ENCODE measurements at regions of chr7 and their contacts with region 1.

Region 1: GRCh38 chr7:105652359-105652993 is 71.2 kb upstream of the EFCAB10 start:
- DNase-seq: no peak
- ATAC-seq: peak; percentile 91
- H3K4me3 ChIP-seq: no peak overlapping the region
- H3K27ac ChIP-seq: no peak overlapping the region
- H3K4me1 ChIP-seq: peaks cover 45% of the 10 kb centered on the region
- H3K27me3 ChIP-seq: no peaks in the 10 kb centered on the region
- CTCF ChIP-seq: peak; percentile 94

Region 2: DNA sequence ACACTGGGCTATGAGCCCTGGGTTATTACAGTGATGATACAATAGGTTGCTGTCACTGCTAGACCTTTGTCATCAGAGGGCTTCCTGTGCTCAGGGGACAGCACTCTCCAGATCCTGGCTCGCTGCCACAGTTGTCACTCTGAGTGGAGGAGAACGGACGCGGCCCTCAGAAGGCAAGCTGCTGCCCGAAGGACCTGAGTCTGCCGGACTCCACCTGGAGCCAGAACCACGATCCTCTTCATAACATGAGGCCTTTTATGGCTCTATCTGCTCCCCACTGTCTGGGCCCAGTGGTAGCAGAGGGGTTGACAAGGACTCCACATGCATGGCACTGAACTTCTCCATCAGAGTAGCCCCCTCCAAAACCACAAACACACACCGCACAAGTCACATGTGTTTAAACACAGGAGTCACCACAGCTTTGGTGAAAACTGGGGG is 23.5 kb after region 1 on chr7:
- CTCF ChIA-PET with region 1: interaction called, 13 read pairs
- POLR2A ChIA-PET with region 1: no interaction called
- in situ Hi-C with region 1: no loop called
- intact Hi-C with region 1: no loop called
- DNase-seq: no peak
- ATAC-seq: no peak
- H3K4me3 ChIP-seq: no peak overlapping the region
- H3K27ac ChIP-seq: no peak overlapping the region
- H3K4me1 ChIP-seq: no peaks in the 10 kb centered on the region
- H3K27me3 ChIP-seq: no peaks in the 10 kb centered on the region
- CTCF ChIP-seq: no peak

Region 3: DNA sequence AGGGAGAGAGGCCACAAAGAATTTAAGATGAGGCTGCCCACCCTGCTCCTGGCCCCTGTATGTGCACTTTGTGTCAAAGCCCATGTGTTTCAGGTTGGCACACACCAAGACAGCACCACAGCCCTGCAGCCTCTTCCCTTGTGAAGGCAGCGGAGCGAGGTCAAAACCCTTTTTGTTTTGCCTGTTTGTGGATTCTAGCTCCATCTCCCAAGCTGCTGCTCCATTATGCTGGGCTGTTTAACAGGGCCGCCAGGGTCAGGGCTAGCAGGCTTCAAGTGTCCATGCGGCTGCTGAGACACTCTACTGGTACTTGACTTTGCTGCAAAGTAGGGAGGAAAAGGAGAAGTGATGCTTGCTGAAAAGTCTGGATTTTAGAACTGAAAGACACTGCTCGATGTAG is 71.1 kb after region 1 on chr7:
- CTCF ChIA-PET with region 1: no interaction called
- POLR2A ChIA-PET with region 1: interaction called, 10 read pairs
- in situ Hi-C with region 1: no loop called
- intact Hi-C with region 1: no loop called
- DNase-seq: no peak
- ATAC-seq: no peak
- H3K4me3 ChIP-seq: no peak overlapping the region
- H3K27ac ChIP-seq: no peak overlapping the region
- H3K4me1 ChIP-seq: no peaks in the 10 kb centered on the region
- H3K27me3 ChIP-seq: no peaks in the 10 kb centered on the region
- CTCF ChIP-seq: no peak

Region 4: DNA sequence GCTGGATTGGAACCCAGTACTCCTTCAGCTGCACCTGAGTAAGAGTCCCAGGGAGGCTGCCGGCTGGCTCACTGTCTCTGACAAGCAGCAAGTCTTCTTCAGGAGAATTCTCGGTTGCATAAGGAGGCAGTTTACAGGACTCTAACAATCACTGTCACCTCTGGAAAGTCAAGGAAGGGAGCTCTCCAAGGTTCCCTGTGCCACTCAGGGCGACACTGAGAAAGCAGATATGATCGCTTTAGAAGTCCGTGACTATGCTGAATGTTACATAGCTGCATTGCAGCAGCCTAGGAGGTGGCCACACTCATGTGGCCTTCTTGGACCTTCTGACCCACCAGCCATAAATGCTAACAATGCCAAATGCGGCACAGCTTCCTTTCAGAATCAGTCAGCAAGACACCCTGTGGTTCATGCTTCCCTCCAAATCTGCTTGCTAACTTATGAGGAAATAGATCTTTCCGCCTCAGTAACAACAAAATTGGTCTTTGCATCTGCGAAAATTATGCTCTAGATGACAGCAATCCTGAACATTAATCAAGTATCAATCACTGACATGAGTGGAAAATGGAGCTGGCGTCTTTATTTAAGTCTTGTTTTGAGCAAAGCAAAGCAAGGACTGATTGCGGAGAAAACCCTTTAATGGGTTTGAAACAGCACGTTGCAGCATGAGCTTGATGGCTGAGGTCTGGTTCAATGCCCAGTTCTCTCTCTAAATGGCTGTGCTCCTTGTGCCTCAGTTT is 91.0 kb after region 1 on chr7:
- CTCF ChIA-PET with region 1: no interaction called
- POLR2A ChIA-PET with region 1: no interaction called
- in situ Hi-C with region 1: no loop called
- intact Hi-C with region 1: loop called (anchors 10 kb)
- DNase-seq: no peak
- ATAC-seq: no peak
- H3K4me3 ChIP-seq: no peak overlapping the region
- H3K27ac ChIP-seq: no peak overlapping the region
- H3K4me1 ChIP-seq: no peaks in the 10 kb centered on the region
- H3K27me3 ChIP-seq: no peaks in the 10 kb centered on the region
- CTCF ChIP-seq: no peak

Region 5: DNA sequence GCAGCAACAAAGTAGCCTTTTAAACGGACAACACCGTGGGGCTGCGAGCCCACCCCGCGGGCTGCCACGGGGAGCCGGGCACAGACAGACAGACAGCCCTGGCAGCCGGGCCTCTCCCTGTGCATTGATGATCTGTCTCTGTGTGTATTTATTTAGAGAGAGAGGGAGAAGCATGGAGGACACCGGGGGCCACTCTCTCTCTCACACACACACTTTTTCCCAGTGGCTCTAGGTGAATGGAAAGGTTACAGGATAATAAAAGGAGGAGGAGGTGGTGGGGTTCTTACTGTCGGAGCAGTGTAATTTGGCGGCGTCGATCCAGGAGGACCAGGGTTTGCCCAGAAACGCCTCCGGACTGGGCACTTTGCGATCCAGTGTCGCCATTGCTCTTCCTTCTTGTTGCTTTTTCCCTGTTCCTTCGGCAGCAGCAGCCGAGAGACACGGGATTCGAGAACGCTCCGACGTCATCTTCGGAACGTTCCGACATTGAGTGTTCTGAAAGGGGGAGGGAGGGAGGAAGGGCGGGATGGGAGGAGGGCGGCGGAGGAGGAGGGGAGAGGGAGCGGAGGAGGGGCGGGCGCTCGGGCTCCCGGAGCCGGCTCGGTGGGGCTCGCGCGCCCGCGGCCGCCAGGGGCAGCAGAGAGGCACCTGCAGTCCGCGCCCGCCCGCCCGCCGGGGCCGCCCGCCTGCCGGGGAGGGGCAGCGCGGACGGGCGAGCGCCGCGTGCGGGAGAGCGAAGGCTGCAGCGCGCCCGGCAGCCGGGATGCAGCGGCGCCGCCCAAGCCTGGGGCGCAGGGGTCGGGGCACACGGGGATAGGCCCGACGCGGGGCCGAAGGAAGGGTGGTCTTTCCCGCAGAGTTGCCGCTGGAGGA is 223.9 kb after region 1 on chr7 and contains the start of gene ATXN7L1:
- CTCF ChIA-PET with region 1: no interaction called
- POLR2A ChIA-PET with region 1: no interaction called
- in situ Hi-C with region 1: no loop called
- intact Hi-C with region 1: loop called (anchors 10 kb)
- DNase-seq: peak; percentile 88
- ATAC-seq: peak; percentile 92
- H3K4me3 ChIP-seq: peak within 1 kb of the TSS; percentile 88 to 98
- H3K27ac ChIP-seq: peak within 1 kb of the TSS; percentile 91
- H3K4me1 ChIP-seq: peaks cover 27% of the 10 kb centered on the region
- H3K27me3 ChIP-seq: no peaks in the 10 kb centered on the region
- CTCF ChIP-seq: peak; percentile 98
- total RNA-seq, gene ATXN7L1: 10.8 TPM

Region 6: DNA sequence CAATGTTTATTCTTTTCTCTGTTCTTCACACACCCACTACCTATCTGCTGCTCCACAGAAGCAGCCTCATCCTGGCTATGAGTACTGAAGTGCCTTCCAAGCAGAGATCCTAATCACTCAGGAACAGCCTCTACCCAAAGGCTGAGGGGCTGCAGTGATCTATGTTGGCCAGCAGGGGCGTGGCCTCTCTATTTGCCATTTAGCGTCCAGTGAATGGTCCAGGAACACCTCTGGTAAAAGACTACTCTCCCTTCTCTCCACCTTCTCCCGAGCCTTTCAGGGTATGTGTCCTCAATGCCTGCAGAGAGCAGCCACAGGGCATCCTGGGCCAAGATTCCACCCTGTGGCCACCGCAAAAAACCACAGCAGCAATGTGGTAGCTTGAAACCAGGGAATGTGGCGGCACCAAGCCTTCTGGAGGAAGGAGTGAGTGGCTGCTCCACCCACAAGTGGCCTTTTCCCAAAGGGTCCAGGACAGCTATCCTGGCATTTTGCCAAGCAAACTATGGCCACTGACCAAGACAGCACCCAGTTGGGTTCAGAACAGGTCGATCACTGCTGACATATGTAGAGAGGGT is 388.8 kb after region 1 on chr7:
- CTCF ChIA-PET with region 1: interaction called, 3 read pairs
- POLR2A ChIA-PET with region 1: no interaction called
- in situ Hi-C with region 1: no loop called
- intact Hi-C with region 1: loop called (anchors 1 kb)
- DNase-seq: peak; percentile 43
- ATAC-seq: peak; percentile 71
- H3K4me3 ChIP-seq: no peak overlapping the region
- H3K27ac ChIP-seq: no peak overlapping the region
- H3K4me1 ChIP-seq: no peaks in the 10 kb centered on the region; the same call in 1 of the 2 replicates
- H3K27me3 ChIP-seq: no peaks in the 10 kb centered on the region; the same call in 1 of the 2 replicates
- CTCF ChIP-seq: peak; percentile 87

Region 7: GRCh38 chr7:106153891-106154449 is 501.5 kb after region 1 on chr7:
- CTCF ChIA-PET with region 1: no interaction called
- POLR2A ChIA-PET with region 1: no interaction called
- in situ Hi-C with region 1: no loop called
- intact Hi-C with region 1: loop called (anchors 10 kb)
- DNase-seq: peak; percentile 64
- ATAC-seq: peak; percentile 99
- H3K4me3 ChIP-seq: no peak overlapping the region
- H3K27ac ChIP-seq: no peak overlapping the region
- H3K4me1 ChIP-seq: no peaks in the 10 kb centered on the region
- H3K27me3 ChIP-seq: no peaks in the 10 kb centered on the region
- CTCF ChIP-seq: peak; percentile 97